CD4-positive, alpha-beta memory T cell (primary cell): ENCODE measurements at regions of chr11 and their contacts with region 1.

Region 1: DNA sequence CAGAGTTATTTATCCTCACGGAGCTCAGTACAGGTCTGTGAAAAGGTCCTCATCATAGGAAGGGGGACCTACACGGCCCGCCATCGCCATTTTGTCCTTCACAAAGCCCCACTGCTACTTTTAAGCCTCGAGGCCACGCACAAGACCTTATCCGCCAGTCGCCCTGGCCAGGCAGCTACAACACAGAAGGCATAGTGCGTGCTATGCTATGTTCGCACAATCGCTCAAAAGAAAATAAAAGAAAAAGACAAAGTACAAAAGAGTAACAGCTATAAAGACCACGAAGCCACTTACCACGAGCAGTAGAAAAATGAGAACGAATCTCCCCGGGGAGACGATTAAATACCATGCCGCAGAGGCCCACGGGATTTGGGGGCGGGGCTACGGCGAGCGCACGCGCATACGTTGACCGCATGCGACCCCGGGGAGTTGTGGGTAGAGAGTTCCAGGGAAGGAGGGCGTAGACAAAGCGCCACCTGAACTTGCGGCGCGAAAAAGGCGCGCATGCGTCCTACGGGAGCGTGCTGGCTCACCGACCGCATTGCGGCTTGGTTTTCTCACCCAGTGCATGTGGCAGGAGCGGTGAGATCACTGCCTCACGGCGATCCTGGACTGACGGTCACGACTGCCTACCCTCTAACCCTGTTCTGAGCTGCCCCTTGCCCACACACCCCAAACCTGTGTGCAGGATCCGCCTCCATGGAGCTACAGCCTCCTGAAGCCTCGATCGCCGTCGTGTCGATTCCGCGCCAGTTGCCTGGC is 16.4 kb upstream of the WDR74 start:
- DNase-seq: peak; percentile 98 to 99 (median 99)
- H3K4me3 ChIP-seq: peak overlapping the region; percentile 89 to 91
- H3K4me3 Mint-ChIP-seq: peak overlapping the region; percentile 95 to 99 (median 96)
- H3K27ac ChIP-seq: peak overlapping the region; percentile 78
- H3K27ac Mint-ChIP-seq: peak overlapping the region; percentile 93 to 98 (median 95)
- H3K4me1 ChIP-seq: peaks cover 57% of the 10 kb centered on the region
- H3K4me1 Mint-ChIP-seq: peaks cover 41 to 67% (median 55%) of the 10 kb centered on the region in 4 donors
- H3K27me3 ChIP-seq: no peaks in the 10 kb centered on the region
- H3K27me3 Mint-ChIP-seq: no peaks in the 10 kb centered on the region

Region 2: GRCh38 chr11:62556108-62556871 is 299.5 kb before region 1 on chr11:
- CTCF ChIA-PET with region 1: no interaction called
- POLR2A ChIA-PET with region 1: interaction called, 24 read pairs
- intact Hi-C with region 1: loop called (anchors 10 kb)
- DNase-seq: peak; percentile 85 to 97 (median 87)
- H3K4me3 ChIP-seq: peak overlapping the region; percentile 37 to 75
- H3K4me3 Mint-ChIP-seq: peak overlapping the region; percentile 82 to 91 (median 90)
- H3K27ac ChIP-seq: peak overlapping the region; percentile 95
- H3K27ac Mint-ChIP-seq: peak overlapping the region; percentile 98 to 100 (median 100)
- H3K4me1 ChIP-seq: peaks cover 98% of the 10 kb centered on the region
- H3K4me1 Mint-ChIP-seq: peaks cover 73 to 97% (median 85%) of the 10 kb centered on the region in 4 donors
- H3K27me3 ChIP-seq: no peaks in the 10 kb centered on the region
- H3K27me3 Mint-ChIP-seq: peaks cover 0 to 2% of the 10 kb centered on the region in 2 donors

Region 3: GRCh38 chr11:62601394-62602140 is 254.2 kb before region 1 on chr11 and contains the start of gene MTA2:
- CTCF ChIA-PET with region 1: no interaction called
- POLR2A ChIA-PET with region 1: interaction called, 18 read pairs
- intact Hi-C with region 1: no loop called
- DNase-seq: peak; percentile 99 to 100 (median 100)
- H3K4me3 ChIP-seq: peak within 1 kb of the TSS; percentile 71 to 82
- H3K4me3 Mint-ChIP-seq: peak within 1 kb of the TSS; percentile 91 to 99 (median 96)
- H3K27ac ChIP-seq: peak within 1 kb of the TSS; percentile 91
- H3K27ac Mint-ChIP-seq: peak within 1 kb of the TSS; percentile 90 to 99 (median 98)
- H3K4me1 ChIP-seq: peaks cover 35% of the 10 kb centered on the region
- H3K4me1 Mint-ChIP-seq: peaks cover 33 to 60% (median 46%) of the 10 kb centered on the region in 4 donors
- H3K27me3 ChIP-seq: no peaks in the 10 kb centered on the region
- H3K27me3 Mint-ChIP-seq: no peaks in the 10 kb centered on the region
- total RNA-seq, gene MTA2: 207 to 210 TPM

Region 4: DNA sequence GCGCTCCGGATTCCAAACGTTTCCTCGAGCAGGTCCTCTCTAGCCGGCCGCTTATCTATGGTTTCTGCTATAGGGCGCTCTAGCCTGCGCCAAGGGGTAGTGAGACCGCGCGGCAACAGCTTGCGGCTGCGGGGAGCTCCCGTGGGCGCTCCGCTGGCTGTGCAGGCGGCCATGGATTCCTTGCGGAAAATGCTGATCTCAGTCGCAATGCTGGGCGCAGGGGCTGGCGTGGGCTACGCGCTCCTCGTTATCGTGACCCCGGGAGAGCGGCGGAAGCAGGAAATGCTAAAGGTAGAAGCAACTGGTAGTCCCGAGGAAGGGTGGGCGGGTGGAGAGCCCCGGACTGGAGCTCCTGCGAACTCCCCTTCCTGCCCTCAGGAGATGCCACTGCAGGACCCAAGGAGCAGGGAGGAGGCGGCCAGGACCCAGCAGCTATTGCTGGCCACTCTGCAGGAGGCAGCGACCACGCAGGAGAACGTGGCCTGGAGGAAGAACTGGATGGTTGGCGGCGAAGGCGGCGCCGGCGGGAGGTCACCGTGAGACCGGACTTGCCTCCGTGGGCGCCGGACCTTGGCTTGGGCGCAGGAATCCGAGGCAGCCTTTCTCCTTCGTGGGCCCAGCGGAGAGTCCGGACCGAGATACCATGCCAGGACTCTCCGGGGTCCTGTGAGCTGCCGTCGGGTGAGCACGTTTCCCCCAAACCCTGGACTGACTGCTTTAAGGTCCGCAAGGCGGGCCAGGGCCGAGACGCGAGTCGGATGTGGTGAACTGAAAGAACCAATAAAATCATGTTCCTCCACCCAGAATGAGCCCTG is 184.0 kb before region 1 on chr11 and contains the starts of genes LBHD1 and UQCC3:
- CTCF ChIA-PET with region 1: interaction called, 4 read pairs
- POLR2A ChIA-PET with region 1: interaction called, 22 read pairs
- intact Hi-C with region 1: no loop called
- DNase-seq: peak; percentile 68 to 80 (median 75)
- H3K4me3 ChIP-seq: peak within 1 kb of the TSS; percentile 91 to 97
- H3K4me3 Mint-ChIP-seq: peak within 1 kb of the TSS; percentile 93 to 99 (median 99)
- H3K27ac ChIP-seq: peak within 1 kb of the TSS; percentile 74
- H3K27ac Mint-ChIP-seq: peak within 1 kb of the TSS; percentile 89 to 98 (median 97)
- H3K4me1 ChIP-seq: peaks cover 55% of the 10 kb centered on the region
- H3K4me1 Mint-ChIP-seq: peaks cover 14 to 74% (median 43%) of the 10 kb centered on the region in 4 donors
- H3K27me3 ChIP-seq: no peaks in the 10 kb centered on the region
- H3K27me3 Mint-ChIP-seq: no peaks in the 10 kb centered on the region
- total RNA-seq, gene LBHD1: 26.7 to 28.6 TPM
- total RNA-seq, gene UQCC3: 7.2 to 8.5 TPM

Region 5: DNA sequence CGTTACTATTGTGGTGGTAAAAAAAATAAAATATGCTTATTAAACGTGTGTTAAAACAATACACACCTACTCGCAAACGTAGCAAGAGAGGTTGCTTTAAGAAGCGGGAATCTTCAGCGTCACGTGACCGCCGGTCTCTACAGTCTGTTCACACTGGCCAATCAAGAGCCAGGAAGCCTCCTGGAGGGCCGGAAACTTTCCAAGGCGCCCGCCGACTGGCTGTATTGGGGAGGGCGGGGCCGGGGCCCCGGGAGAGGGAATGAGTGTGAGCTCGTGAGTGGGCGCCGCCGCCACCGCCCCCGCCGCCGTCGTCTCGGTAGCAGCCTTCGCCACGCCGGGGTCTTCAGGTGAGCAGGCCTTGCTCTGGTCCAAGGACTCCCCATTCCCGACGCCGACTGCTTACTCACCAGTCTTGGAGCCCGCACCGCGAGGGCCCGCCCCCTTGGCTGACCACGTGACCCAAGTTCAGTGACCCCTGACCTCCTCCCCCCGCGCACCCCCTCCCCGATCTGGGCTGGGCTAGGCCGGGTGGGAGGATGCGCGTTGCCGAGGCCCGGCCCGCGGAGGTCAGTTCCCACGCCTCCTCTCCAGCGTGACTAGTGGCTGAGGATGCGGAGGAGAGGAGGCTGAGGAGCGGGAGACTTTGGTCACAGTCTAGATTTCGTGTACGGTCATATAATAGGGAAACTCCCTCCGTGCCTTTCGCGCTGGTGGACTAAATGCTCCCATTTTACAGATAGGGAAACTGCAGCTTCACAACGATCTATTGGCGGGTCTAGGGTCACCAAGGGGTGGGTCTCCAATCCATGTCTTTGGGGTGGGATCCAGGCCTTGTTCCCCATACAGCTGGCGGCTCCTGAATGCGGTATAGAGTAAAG is 84.4 kb before region 1 on chr11 and contains the start of gene TAF6L:
- CTCF ChIA-PET with region 1: interaction called, 7 read pairs
- POLR2A ChIA-PET with region 1: interaction called, 44 read pairs
- intact Hi-C with region 1: no loop called
- DNase-seq: peak; percentile 86 to 92 (median 88)
- H3K4me3 ChIP-seq: peak within 1 kb of the TSS; percentile 67 to 83
- H3K4me3 Mint-ChIP-seq: peak within 1 kb of the TSS; percentile 87 to 97 (median 92)
- H3K27ac ChIP-seq: peak within 1 kb of the TSS; percentile 82
- H3K27ac Mint-ChIP-seq: peak within 1 kb of the TSS; percentile 92 to 99 (median 97)
- H3K4me1 ChIP-seq: peaks cover 24% of the 10 kb centered on the region
- H3K4me1 Mint-ChIP-seq: peaks cover 14 to 32% (median 22%) of the 10 kb centered on the region in 4 donors
- H3K27me3 ChIP-seq: no peaks in the 10 kb centered on the region
- H3K27me3 Mint-ChIP-seq: no peaks in the 10 kb centered on the region
- total RNA-seq, gene TAF6L: 26.3 to 34.0 TPM

Region 6: GRCh38 chr11:62794201-62794775 is 61.5 kb before region 1 on chr11:
- CTCF ChIA-PET with region 1: interaction called, 72 read pairs
- POLR2A ChIA-PET with region 1: interaction called, 263 read pairs
- intact Hi-C with region 1: loop called (anchors 1 kb)
- DNase-seq: no peak
- H3K4me3 ChIP-seq: no peak overlapping the region
- H3K4me3 Mint-ChIP-seq: peak overlapping the region in 3 of 8 donors; percentile 1 to 68 (median 36)
- H3K27ac ChIP-seq: no peak overlapping the region
- H3K27ac Mint-ChIP-seq: peak overlapping the region in 5 of 7 donors; percentile 12 to 88 (median 43)
- H3K4me1 ChIP-seq: peaks cover 32% of the 10 kb centered on the region
- H3K4me1 Mint-ChIP-seq: peaks cover 26 to 49% (median 33%) of the 10 kb centered on the region in 4 donors
- H3K27me3 ChIP-seq: no peaks in the 10 kb centered on the region
- H3K27me3 Mint-ChIP-seq: no peaks in the 10 kb centered on the region

Region 7: DNA sequence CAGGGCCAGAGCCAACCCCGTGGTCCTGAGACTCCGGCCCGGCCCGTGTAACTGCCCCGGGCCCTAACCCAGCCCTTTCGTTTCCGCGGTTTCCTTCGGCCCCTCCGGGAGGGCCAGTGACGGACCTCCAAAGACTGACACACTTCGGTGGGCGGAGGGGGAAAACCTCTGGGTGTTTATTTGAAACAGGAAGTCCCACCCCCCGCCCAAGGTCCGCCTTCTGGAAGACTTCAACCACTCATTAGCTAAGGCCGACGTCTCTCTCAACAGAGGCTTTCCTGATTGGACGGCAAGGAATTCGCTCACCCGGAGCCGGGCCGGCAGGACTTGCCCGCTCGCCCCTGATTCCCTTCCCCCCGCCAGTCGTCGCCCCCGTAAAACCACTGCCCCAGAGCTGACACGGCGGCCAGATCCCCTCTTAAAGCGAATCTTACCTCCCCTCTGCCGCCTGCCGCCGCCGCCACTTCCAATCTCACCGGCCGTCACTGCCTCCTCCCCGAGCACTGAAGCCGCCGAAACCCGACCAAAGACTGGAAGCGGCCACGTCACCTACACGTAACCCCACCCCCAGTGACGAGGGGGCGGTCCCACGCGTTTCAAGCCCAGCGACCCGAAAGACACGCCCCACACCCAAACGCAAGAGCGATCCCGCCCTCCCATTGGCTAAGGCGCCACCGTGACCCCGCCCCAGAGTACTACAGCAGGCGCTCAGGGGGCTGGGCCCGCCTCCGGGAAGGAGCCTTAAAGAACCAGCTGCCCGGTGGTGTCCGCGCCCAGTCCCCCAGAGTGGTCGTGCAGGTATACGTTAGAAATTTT is 24.0 kb before region 1 on chr11 and contains the start of gene STX5:
- CTCF ChIA-PET with region 1: no interaction called
- POLR2A ChIA-PET with region 1: interaction called, 117 read pairs
- intact Hi-C with region 1: loop called (anchors 1 kb)
- DNase-seq: peak; percentile 99 to 100 (median 100)
- H3K4me3 ChIP-seq: peak within 1 kb of the TSS; percentile 82 to 85
- H3K4me3 Mint-ChIP-seq: peak within 1 kb of the TSS; percentile 94 to 100 (median 98)
- H3K27ac ChIP-seq: peak within 1 kb of the TSS; percentile 97
- H3K27ac Mint-ChIP-seq: peak within 1 kb of the TSS; percentile 94 to 100 (median 99)
- H3K4me1 ChIP-seq: peaks cover 30% of the 10 kb centered on the region
- H3K4me1 Mint-ChIP-seq: peaks cover 21 to 59% (median 41%) of the 10 kb centered on the region in 4 donors
- H3K27me3 ChIP-seq: no peaks in the 10 kb centered on the region
- H3K27me3 Mint-ChIP-seq: no peaks in the 10 kb centered on the region
- total RNA-seq, gene STX5: 66.0 to 67.9 TPM